ENCODE measurements at regions of chr2 and their contacts with region 1.

Region 1: DNA sequence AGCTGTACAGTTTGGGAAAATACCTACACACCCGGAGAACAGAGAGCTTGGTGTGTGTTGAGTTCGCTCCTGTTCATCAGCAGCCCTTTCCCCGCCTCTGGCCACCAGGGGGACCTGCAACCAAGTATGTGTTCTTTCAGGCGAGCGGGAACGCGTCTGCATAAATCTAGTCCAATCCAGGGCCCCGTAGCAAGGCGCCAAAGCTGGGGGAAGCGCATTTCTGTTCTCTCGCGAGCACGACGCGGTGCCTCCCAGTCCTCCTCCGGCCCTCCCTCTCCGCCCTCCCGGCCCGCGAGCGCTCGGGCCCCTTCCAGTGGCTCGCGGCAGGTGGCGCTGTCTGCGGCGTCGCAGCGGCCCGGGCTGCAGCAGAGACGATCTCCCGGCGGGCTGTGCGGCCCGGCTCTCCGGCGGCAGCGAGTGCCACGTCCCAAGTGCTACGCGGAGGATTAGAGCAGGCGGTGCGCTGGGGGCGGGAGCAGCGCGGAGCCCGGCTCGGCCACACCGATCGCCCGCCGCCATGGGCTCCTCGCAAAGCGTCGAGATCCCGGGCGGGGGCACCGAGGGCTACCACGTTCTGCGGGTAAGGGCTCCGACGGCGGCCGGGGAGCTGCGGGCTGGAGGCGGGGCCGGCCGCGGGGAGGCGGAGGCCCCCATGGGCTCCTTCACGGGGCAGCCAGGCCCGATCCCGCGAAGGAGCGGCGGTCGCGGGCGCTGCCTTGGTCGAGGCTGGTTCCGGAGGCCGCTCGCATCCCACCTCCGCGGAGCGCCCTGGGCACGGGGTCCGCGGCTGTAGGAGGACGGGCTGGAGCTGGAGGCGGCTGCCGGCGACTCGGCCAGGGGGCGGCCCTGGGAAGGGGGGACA is at the start of gene GORASP2:
- DNase-seq: peak; percentile 99
- H3K4me3 Mint-ChIP-seq: peak within 1 kb of the TSS; percentile 97
- H3K27ac Mint-ChIP-seq: peak within 1 kb of the TSS; percentile 96
- H3K4me1 Mint-ChIP-seq: peaks cover 34% of the 10 kb centered on the region
- H3K27me3 Mint-ChIP-seq: no peaks in the 10 kb centered on the region
- total RNA-seq, gene GORASP2: 64.5 to 73.7 TPM

Region 2: DNA sequence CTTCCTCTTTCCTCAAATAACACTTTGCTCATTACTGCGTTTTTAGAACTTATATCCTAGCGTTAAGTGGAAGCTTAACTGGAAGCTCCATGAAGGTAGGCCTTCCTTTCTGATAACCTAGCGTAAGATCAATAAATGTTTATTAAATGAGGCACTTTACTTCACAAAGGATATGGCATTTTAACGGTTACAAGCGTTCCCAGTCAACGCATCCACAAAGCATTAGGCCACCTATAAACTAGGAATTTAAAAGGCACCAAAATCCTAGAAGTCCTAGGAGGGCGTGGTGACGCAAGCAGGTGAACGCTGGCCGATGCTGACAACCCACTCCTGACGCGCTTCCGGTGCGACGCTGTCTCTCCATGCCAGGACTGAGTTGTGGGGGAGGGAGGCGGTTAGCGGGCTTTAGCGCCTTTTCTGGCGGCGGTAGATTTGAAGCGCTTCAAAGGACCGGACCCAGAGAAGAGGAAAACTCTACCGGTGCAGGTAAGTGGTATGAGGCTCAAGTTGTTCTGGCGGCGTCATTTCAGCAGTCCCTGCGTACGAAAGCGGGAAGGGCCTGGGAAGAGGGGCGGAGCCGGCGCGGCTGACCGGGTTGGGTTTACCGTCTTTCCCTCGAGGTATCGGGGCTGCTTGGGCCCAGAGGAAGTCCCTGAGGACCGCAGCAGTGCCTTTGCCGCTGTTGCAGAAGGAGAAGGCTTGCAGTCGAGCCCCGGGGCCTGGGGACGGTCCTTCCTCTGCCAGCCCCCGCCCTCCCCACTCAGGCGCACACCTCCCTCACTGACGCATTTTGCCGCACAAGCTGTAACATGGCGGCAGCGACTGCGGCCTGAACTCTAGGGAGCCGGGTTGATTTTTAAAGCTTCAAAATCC is 1344.8 kb before region 1 on chr2 and contains the start of gene PPIG:
- CTCF ChIA-PET with region 1: no interaction called
- POLR2A ChIA-PET with region 1: no interaction called
- intact Hi-C with region 1: loop called (anchors 5 kb)
- DNase-seq: peak; percentile 93
- H3K4me3 Mint-ChIP-seq: peak within 1 kb of the TSS; percentile 99
- H3K27ac Mint-ChIP-seq: peak within 1 kb of the TSS; percentile 98
- H3K4me1 Mint-ChIP-seq: peaks cover 27% of the 10 kb centered on the region
- H3K27me3 Mint-ChIP-seq: no peaks in the 10 kb centered on the region
- total RNA-seq, gene PPIG: 52.3 to 55.3 TPM

Region 3: DNA sequence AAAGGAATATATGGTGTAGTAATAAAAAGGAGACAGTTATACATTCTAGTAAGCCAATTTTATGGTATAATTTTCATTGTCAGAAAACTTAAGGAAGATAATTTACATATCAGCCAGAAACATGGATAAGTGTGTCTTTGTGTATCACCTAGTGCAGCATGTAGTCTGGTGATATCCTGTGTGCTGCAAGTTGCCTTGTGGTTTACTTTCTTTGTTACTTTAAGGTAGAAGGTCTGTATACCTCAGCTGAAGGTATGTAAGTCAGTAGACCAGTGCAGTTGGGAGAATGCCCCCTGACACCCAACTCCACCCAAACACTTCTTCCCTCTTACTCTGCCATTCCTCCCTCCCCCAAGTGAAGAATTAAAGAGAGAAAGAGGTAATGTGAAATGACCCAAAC is 11.0 kb after region 1 on chr2:
- CTCF ChIA-PET with region 1: interaction called, 20 read pairs
- POLR2A ChIA-PET with region 1: interaction called, 6 read pairs
- intact Hi-C with region 1: no loop called
- DNase-seq: no peak
- H3K4me3 Mint-ChIP-seq: no peak overlapping the region
- H3K27ac Mint-ChIP-seq: no peak overlapping the region
- H3K4me1 Mint-ChIP-seq: peaks cover 69% of the 10 kb centered on the region
- H3K27me3 Mint-ChIP-seq: no peaks in the 10 kb centered on the region

Region 4: DNA sequence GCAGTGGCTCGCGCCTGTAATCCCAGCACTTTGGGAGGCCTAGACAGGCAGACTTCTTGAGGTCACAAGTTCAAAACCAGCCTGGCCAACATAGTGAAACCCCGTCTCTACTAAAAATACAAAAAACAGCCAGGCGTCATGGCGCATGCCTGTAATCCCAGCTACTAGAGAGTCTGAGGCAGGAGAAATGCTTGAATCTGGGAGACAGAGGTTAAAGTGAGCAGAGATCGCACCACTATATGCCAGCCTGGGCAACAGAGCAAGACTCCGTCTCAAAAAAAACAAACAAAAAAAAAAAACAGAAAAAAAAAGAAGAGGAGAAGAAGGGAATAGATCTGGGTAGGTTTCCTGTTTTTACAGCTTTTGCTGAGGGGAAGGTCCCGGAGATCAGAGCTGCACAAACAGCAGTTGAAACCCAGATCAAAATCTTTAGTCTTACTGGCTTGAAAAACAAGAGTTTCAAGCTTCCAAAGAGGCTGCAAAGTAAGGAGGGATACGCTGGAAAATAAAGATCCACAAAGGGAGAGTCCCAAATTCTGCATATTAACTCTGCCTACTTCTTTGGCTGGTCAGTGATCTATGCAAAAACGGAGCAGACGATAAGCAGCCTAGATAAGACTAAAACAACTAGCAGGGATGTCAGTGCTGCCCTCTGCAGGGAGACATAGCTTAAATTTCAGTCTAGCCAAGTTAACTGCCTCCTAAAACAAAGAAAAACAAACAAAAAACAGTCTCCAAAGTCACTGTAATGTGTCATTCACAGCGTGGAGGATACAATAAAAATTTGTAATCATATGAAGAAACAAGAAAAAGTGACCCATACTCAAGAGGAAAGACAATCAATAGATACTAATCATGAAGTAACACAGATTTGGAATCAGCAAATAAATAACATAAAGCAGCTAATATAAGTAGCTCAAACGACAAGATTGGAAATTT is 157.6 kb after region 1 on chr2:
- CTCF ChIA-PET with region 1: interaction called, 8 read pairs
- POLR2A ChIA-PET with region 1: no interaction called
- intact Hi-C with region 1: loop called (anchors 2 kb)
- DNase-seq: peak; percentile 66
- H3K4me3 Mint-ChIP-seq: peak overlapping the region; percentile 64
- H3K27ac Mint-ChIP-seq: peak overlapping the region; percentile 43
- H3K4me1 Mint-ChIP-seq: peaks cover 58% of the 10 kb centered on the region
- H3K27me3 Mint-ChIP-seq: no peaks in the 10 kb centered on the region

Region 5: DNA sequence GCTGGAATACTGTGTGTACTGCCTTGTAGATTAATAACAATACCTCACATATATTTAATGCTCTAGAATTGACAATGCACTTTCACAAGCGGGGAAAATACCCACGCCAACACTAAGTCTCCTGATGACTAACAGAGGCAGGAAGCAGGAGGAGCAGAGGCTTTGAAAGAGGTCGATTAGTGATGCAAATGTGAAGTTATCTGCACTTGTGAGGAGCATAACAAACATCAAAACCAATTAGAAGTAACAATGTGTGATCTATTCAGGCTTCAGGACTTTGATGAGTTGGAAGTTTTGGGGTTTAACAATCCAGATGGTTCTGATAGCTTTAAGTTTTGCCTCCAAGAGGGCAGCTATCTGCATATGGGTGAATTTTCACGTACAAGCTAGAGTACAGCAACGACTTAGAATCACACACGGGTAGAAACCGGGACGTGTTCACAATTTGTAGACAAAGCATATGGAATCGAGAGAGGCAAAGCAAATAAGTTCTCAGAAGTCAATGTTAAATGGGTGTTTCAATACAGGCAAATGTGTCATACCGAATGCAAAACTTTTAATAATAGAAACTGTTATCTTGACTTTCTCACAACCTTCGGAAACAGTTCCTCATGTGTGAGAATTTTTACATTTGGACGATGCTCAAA is 390.2 kb after region 1 on chr2:
- CTCF ChIA-PET with region 1: interaction called, 6 read pairs
- POLR2A ChIA-PET with region 1: interaction called, 7 read pairs
- intact Hi-C with region 1: loop called (anchors 2 kb)
- DNase-seq: peak; percentile 78
- H3K4me3 Mint-ChIP-seq: peak overlapping the region; percentile 69
- H3K27ac Mint-ChIP-seq: peak overlapping the region; percentile 99
- H3K4me1 Mint-ChIP-seq: peaks cover 61% of the 10 kb centered on the region
- H3K27me3 Mint-ChIP-seq: no peaks in the 10 kb centered on the region

Region 6: DNA sequence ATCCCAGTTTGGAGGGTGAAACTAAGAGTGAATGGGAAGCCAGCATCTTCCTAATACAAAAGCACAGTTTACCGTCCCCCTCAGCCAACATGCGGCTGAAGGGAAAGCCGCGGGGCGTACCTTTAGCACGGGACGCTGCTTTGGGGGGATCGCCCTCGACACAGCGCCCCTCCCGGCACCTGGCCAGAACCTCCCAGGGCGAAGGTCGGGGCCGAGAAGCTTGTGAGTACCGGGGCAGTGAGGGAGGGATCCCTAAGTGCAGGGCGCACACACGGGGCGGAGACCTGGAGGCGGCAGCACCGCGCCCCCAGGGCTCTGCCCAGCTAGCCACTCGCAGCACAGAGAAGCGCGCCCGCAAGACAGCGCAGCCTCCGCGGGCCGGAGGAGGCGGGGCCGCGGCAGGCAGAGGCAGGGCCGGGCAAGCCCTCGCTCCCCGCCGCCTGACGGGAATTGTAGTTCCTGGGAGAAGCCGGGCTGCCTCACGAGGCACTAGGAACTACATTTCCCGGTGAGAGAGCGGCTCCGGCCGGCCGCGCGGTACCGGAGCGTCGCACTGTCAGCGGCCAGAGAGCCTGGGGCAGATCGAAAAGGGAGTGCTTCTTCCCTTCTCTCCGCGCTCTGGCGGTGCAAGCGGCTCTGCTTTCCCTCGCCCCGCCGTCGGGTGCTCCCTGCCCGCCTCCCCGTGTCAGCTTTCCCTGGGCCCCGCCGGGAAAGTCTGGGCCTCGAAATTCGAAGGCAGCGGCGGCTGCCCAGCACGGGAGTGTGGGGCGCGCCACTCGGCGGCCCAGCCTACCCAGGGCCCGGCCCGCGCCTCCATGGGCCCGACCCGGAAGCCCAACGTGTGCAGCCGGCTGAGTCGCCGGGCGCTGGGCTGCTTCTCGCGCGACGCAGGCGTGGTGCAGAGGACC is 505.0 kb after region 1 on chr2 and contains the starts of genes DCAF17 and METTL8:
- CTCF ChIA-PET with region 1: interaction called, 13 read pairs
- POLR2A ChIA-PET with region 1: interaction called, 13 read pairs
- intact Hi-C with region 1: loop called (anchors 1 kb)
- DNase-seq: peak; percentile 96
- H3K4me3 Mint-ChIP-seq: peak within 1 kb of the TSS; percentile 92
- H3K27ac Mint-ChIP-seq: peak within 1 kb of the TSS; percentile 92
- H3K4me1 Mint-ChIP-seq: peaks cover 57% of the 10 kb centered on the region
- H3K27me3 Mint-ChIP-seq: no peaks in the 10 kb centered on the region
- total RNA-seq, gene DCAF17: 14.1 to 14.7 TPM
- total RNA-seq, gene METTL8: 33.3 to 40.9 TPM

Region 7: GRCh38 chr2:171687287-171688128 is 758.5 kb after region 1 on chr2 and contains the start of gene DYNC1I2:
- CTCF ChIA-PET with region 1: interaction called, 4 read pairs
- POLR2A ChIA-PET with region 1: no interaction called
- intact Hi-C with region 1: loop called (anchors 1 kb)
- DNase-seq: peak; percentile 88
- H3K4me3 Mint-ChIP-seq: peak within 1 kb of the TSS; percentile 89
- H3K27ac Mint-ChIP-seq: peak within 1 kb of the TSS; percentile 85
- H3K4me1 Mint-ChIP-seq: peaks cover 20% of the 10 kb centered on the region
- H3K27me3 Mint-ChIP-seq: no peaks in the 10 kb centered on the region
- total RNA-seq, gene DYNC1I2: 54.2 to 55.8 TPM